ENCODE measurements at regions of chr6 and their contacts with region 1.

Region 1: DNA sequence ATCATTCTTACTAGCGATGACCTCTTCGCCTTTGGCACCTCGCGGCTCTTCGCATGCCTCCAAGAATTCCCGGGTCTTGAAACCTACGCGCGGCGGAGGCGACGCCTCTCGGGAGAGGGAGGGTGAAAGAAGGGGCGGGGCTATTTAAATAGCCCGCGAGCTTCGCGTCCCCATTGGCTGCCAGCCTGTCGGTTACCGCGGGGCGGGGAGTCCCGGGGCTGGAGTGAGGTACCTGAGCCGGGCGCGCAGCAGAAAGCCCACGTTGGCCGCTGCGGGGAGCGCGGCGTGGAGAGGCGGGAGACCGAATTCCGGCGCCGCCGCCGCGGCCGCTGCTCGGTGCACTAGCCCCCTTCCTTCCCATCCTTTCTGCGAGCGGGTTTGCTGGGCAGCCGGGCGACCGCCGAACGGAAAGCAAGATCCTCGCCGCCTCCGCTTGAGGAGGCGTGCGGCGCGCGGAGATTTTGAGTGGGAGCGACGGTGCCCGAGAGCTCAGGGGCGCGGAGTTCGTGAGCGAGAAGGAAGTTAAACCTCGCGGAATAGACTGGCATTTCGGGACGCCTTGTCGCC is at the start of gene BMP6:
- DNase-seq: peak; percentile 95
- ATAC-seq: peak; percentile 82
- H3K4me3 Mint-ChIP-seq: peak within 1 kb of the TSS; percentile 74
- H3K27ac Mint-ChIP-seq: no peak within 1 kb of the TSS
- H3K4me1 Mint-ChIP-seq: peaks cover 23% of the 10 kb centered on the region
- H3K27me3 Mint-ChIP-seq: peaks cover 80% of the 10 kb centered on the region
- CTCF ChIP-seq: no peak
- total RNA-seq, gene BMP6: 1.0 to 1.2 TPM (median 1.1 TPM) in 3 replicates

Region 2: GRCh38 chr6:7673063-7673536 is 52.8 kb before region 1 on chr6:
- CTCF ChIA-PET with region 1: interaction called, 17 read pairs
- POLR2A ChIA-PET with region 1: no interaction called
- DNase-seq: peak; percentile 75
- ATAC-seq: peak; percentile 96
- H3K4me3 Mint-ChIP-seq: peak overlapping the region; percentile 59
- H3K27ac Mint-ChIP-seq: no peak overlapping the region
- H3K4me1 Mint-ChIP-seq: peaks cover 13% of the 10 kb centered on the region
- H3K27me3 Mint-ChIP-seq: peaks cover 3% of the 10 kb centered on the region
- CTCF ChIP-seq: no peak

Region 3: DNA sequence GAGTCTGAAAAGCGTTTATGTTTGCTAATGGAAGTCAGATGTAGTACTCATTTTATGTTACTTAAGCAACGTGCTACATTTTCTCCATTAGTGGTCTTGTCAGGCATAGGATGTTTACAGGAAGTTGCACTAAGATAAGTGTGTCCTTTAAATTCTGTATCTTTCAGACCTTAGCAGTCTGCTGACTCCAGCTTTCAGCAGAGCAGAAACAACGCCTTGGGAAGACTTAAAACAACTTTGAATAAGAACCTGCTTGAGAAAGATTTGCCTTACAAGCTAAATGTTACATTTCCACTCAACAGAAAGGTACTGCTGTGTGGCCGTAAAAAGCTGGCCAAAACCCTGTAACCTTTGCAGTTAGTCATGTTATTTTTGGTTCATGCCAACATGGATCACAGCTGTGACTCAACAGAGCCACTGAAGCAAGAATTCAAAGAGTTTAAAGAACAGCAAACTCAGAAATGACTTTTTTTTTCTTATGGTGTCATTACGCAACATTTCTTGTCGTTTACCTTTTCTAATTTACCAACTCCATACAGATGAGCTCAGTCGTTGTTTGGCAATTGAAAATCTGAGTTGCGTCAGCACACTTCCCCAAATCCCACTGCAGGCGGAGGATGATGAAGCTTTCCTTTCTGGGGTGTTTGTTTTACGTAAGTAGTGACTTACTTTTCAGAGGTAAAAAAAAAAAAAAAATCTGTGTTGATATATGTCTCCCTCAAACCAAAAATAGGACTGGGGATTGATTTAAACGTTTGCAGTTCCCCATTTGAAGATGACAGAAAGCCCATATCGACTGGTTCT is 27.9 kb before region 1 on chr6:
- CTCF ChIA-PET with region 1: interaction called, 17 read pairs
- POLR2A ChIA-PET with region 1: no interaction called
- DNase-seq: no peak
- ATAC-seq: no peak
- H3K4me3 Mint-ChIP-seq: no peak overlapping the region
- H3K27ac Mint-ChIP-seq: no peak overlapping the region
- H3K4me1 Mint-ChIP-seq: peaks cover 14% of the 10 kb centered on the region
- H3K27me3 Mint-ChIP-seq: no peaks in the 10 kb centered on the region
- CTCF ChIP-seq: no peak

Region 4: GRCh38 chr6:7747016-7747415 is 21.1 kb after region 1 on chr6:
- CTCF ChIA-PET with region 1: interaction called, 11 read pairs
- POLR2A ChIA-PET with region 1: no interaction called
- DNase-seq: no peak
- ATAC-seq: 0 out of 2 replicates have a peak, but pooled peaks have one; percentile 18
- H3K4me3 Mint-ChIP-seq: no peak overlapping the region
- H3K27ac Mint-ChIP-seq: no peak overlapping the region
- H3K4me1 Mint-ChIP-seq: peaks cover 11% of the 10 kb centered on the region
- H3K27me3 Mint-ChIP-seq: no peaks in the 10 kb centered on the region
- CTCF ChIP-seq: no peak